ENCODE measurements at regions of chr1 and their contacts with region 1.

Region 1: GRCh38 chr1:150561974-150562445 is 12.8 kb downstream of the ADAMTSL4 start:
- DNase-seq: peak; percentile 92
- H3K4me3 ChIP-seq: peak overlapping the region; percentile 3 to 49 (median 41)
- H3K27ac ChIP-seq: peak overlapping the region; percentile 99
- H3K4me1 ChIP-seq: peaks cover 57% of the 10 kb centered on the region
- H3K27me3 ChIP-seq: no peaks in the 10 kb centered on the region
- CTCF ChIP-seq: no peak
- POLR2A ChIP-seq: peak; percentile 15

Region 2: GRCh38 chr1:150410582-150411101 is 151.4 kb before region 1 on chr1:
- CTCF ChIA-PET with region 1: no interaction called
- POLR2A ChIA-PET with region 1: no interaction called
- dilution Hi-C with region 1: no loop called
- intact Hi-C with region 1: no loop called
- DNase-seq: no peak
- H3K4me3 ChIP-seq: no peak overlapping the region
- H3K27ac ChIP-seq: no peak overlapping the region
- H3K4me1 ChIP-seq: no peaks in the 10 kb centered on the region
- H3K27me3 ChIP-seq: no peaks in the 10 kb centered on the region
- CTCF ChIP-seq: no peak
- POLR2A ChIP-seq: no peak

Region 3: DNA sequence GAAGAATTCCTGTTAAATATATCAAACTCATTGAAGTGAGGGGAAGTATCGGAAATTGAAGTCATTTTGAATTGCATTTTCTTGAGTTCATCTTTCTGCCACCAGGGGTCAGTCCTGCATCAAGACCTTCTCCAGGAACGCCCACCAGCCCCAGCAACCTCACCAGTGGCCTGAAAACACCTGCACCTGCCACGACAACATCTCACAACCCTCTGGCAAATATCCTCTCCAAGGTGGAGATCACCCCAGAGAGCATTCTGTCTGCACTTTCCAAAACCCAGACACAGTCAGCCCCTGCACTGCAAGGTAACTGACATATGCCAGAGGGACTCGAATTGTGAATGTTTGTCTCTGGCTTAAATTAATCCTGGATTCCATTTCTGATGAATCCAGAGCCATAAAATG is 97.6 kb before region 1 on chr1:
- CTCF ChIA-PET with region 1: interaction called, 7 read pairs
- POLR2A ChIA-PET with region 1: no interaction called
- dilution Hi-C with region 1: no loop called
- intact Hi-C with region 1: loop called (anchors 1 kb)
- DNase-seq: peak; percentile 71
- H3K4me3 ChIP-seq: no peak overlapping the region
- H3K27ac ChIP-seq: no peak overlapping the region
- H3K4me1 ChIP-seq: peaks cover 2% of the 10 kb centered on the region
- H3K27me3 ChIP-seq: no peaks in the 10 kb centered on the region
- CTCF ChIP-seq: peak; percentile 69 to 71
- POLR2A ChIP-seq: no peak

Region 4: DNA sequence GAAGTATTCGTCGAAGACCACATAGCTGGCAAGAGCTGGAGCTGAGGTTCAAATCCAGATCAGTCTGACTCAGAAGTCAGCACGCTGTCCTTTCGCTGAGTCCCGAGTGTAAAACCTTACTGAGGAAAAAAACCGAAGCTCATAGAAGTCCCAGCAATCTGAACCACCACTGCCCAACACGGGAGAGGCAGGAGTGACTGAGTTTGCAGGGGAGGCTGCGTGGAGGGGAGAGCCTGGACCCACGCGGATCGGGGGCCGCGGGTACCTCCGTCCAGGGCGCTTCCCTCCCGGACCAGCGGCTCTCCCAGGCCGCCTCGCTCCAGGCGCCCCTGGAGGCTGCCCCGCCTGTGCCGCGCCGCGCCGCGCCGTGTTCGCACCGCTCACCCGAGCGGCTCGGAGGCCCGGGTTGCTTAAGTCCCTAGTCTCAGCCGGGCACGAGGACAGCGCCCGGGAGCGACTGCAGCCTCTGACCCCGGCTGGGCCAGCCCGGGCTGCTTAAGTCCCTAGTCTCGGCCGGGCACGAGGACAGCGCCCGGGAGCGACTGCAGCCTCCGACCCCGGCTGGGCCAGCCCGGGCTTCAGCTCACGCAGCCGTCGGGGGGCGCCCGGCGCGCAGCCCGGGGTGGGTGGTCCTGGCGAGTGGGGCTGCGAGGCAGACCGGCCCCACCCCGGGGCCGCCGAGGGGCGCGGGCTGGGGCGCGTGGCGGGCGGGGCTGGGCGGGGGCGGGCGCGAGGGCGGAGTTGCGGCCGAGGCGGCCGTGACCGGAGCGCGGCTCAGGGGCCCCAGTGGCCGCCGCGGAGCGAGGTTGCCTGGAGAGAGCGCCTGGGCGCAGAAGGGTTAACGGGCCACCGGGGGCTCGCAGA is 13.1 kb before region 1 on chr1 and contains the start of gene ADAMTSL4:
- CTCF ChIA-PET with region 1: interaction called, 55 read pairs
- POLR2A ChIA-PET with region 1: no interaction called
- dilution Hi-C with region 1: no loop called
- intact Hi-C with region 1: no loop called
- DNase-seq: peak; percentile 68
- H3K4me3 ChIP-seq: peak within 1 kb of the TSS; percentile 25 to 36 (median 34)
- H3K27ac ChIP-seq: no peak within 1 kb of the TSS
- H3K4me1 ChIP-seq: peaks cover 22% of the 10 kb centered on the region
- H3K27me3 ChIP-seq: peaks cover 2 to 3% of the 10 kb centered on the region in 2 experiments
- CTCF ChIP-seq: peak in 1 of 2 donors; percentile 28
- POLR2A ChIP-seq: peak; percentile 3
- total RNA-seq, gene ADAMTSL4: 0.37 and 0.73 TPM in 2 replicates

Region 5: DNA sequence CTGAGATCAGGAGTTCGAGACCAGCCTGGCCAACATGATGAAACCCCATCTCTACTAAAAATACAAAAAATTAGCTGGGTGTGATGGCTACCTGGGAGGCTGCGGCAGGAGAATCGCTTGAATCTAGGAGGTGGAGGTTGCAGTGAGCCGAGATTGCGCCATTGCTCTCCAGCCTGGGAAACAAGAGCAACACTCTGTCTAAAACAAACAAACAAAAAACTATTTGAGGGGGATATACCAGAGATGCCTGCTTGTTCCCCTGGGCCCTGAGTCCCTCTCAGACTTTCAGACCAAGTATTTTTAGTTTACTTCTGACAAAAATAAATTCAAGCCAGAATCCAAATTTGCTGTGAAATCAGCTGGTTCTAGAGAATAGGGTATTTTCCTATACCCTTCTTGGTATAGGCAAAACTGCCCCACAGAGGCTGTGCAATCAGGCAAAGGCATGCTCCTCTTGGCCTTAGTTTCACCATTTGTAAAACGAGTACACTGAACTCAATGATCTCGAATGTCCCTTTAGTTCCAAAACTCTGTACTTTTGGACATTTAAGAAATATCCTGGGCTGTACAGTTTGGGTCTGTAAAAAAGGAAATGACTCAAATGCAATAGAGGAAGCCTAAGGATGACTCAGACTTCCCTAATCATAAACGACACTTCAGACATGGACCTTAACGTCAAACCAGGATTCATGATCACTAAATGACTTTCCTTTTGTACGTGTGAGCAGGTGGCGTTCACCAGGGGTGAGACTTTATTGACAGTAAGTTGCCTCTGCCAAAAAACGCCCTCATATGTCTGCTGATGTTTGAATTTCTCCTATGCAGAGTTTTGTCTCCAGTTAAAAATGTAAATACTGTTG is 51.3 kb after region 1 on chr1:
- CTCF ChIA-PET with region 1: interaction called, 288 read pairs
- POLR2A ChIA-PET with region 1: interaction called, 3 read pairs
- dilution Hi-C with region 1: no loop called
- intact Hi-C with region 1: loop called (anchors 1 kb)
- DNase-seq: peak; percentile 94
- H3K4me3 ChIP-seq: peak overlapping the region in 1 of 3 experiments; percentile 14
- H3K27ac ChIP-seq: peak overlapping the region; percentile 100
- H3K4me1 ChIP-seq: peaks cover 43% of the 10 kb centered on the region
- H3K27me3 ChIP-seq: no peaks in the 10 kb centered on the region
- CTCF ChIP-seq: no peak
- POLR2A ChIP-seq: peak; percentile 78

Region 6: DNA sequence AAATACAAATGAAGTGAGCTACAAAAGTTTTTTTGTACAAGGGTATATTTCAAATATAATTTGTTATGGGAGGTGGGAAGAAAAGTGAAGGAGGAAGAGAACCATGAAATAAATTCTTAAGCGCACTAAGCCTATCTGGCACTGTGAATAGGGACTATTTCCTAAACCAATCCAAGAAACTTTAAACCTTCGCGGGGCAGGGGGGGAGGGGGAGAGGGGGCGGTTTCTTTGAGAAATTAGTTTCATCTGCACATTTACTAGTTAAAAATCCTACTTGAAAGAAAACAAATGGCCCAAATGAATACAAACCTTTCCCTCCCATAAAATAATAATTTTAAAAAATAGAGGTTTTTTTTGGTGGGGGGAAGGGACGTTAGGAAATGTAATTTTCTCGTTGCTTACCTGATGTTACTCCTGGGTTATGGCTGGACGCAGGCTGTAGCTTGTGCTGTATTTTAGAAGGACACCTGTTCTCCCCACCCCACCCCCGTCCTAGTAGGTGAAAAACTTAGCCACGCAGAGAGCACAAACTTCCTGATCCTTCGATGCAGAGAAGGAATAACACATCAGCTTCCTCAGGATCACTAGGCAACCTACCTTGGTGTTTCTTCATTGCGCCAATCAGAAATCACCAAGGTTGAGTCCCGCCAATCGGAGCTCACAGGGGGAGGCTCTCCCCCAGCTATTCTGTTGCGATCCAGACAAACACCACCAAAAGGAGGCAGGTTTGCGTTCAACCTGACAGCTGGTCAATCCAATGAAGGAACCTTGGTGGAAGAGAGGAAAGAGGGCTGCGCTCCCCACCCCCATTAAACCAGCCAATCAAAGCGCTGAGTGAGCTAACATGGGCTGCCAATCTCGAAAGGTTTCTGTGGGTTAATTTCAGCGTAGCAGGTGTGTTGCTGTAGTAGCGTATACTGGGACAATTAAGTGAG is 134.8 kb after region 1 on chr1 and contains the start of gene GOLPH3L:
- CTCF ChIA-PET with region 1: interaction called, 6 read pairs
- POLR2A ChIA-PET with region 1: no interaction called
- dilution Hi-C with region 1: no loop called
- intact Hi-C with region 1: loop called (anchors 1 kb)
- DNase-seq: peak; percentile 100
- H3K4me3 ChIP-seq: peak within 1 kb of the TSS; percentile 72 to 96 (median 87)
- H3K27ac ChIP-seq: peak within 1 kb of the TSS; percentile 57
- H3K4me1 ChIP-seq: peaks cover 32% of the 10 kb centered on the region
- H3K27me3 ChIP-seq: no peaks in the 10 kb centered on the region
- CTCF ChIP-seq: peak in 1 of 2 donors; percentile 15
- POLR2A ChIP-seq: peak; percentile 73
- total RNA-seq, gene GOLPH3L: 33.2 and 34.9 TPM in 2 replicates

Region 7: GRCh38 chr1:150876119-150876454 is 314.1 kb after region 1 on chr1:
- CTCF ChIA-PET with region 1: no interaction called
- POLR2A ChIA-PET with region 1: no interaction called
- dilution Hi-C with region 1: no loop called
- intact Hi-C with region 1: loop called (anchors 1 kb)
- DNase-seq: peak; percentile 73
- H3K4me3 ChIP-seq: peak overlapping the region; percentile 81 to 92 (median 91)
- H3K27ac ChIP-seq: peak overlapping the region; percentile 74
- H3K4me1 ChIP-seq: peaks cover 13% of the 10 kb centered on the region
- H3K27me3 ChIP-seq: no peaks in the 10 kb centered on the region
- CTCF ChIP-seq: no peak
- POLR2A ChIP-seq: no peak